ENCODE measurements at regions of chr17 and their contacts with region 1.

Region 1: DNA sequence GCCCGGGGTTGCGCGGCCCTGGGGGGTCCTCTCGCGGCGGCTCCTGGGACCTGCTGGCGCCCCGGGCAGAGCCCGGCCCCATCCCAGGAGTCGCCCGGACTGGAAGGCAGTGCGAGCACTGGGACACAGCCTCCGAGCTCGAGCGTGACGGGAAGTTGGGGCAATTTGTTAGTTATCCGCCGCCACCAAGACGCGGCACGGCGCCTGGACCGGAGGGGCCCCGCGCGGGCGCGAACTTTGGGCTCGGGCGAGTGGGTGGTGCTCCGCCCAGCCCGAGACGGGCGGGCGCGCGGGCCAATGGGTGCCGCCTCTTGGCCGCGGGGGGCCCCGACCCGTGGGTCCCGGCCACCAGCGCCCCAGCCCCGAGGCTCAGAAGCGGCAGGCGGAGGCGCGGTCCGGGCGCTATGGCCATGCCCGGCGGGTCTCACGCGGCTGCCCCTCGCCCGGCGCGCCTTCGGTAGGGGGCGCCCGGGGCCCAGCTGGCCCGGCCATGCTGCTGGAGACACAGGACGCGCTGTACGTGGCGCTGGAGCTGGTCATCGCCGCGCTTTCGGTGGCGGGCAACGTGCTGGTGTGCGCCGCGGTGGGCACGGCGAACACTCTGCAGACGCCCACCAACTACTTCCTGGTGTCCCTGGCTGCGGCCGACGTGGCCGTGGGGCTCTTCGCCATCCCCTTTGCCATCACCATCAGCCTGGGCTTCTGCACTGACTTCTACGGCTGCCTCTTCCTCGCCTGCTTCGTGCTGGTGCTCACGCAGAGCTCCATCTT is at the start of gene ADORA2B:
- DNase-seq: no peak
- H3K4me3 ChIP-seq: peak within 1 kb of the TSS; percentile 79
- CTCF ChIP-seq: peak; percentile 79

Region 2: DNA sequence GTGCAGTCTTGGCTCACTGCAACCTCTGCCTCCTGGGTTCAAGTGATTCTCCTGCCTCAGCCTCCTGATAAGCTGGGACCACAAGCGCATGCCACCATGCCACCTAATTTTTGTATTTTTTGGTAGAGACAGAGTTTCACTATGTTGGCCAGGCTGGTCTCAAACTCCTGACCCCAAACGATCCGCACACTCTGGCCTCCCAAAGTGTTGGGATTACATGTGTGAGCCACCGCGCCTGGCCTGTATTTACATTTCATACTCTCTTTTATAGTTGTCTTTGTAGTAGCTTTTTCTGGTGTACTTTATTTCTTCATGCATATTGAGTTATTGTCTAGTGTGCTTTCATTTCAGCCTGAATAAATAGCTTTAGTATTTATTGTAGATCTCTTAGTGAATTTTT is 10.1 kb before region 1 on chr17:
- CTCF ChIA-PET with region 1: interaction called, 27 read pairs
- POLR2A ChIA-PET with region 1: no interaction called
- DNase-seq: no peak
- H3K4me3 ChIP-seq: no peak overlapping the region
- CTCF ChIP-seq: no peak

Region 3: DNA sequence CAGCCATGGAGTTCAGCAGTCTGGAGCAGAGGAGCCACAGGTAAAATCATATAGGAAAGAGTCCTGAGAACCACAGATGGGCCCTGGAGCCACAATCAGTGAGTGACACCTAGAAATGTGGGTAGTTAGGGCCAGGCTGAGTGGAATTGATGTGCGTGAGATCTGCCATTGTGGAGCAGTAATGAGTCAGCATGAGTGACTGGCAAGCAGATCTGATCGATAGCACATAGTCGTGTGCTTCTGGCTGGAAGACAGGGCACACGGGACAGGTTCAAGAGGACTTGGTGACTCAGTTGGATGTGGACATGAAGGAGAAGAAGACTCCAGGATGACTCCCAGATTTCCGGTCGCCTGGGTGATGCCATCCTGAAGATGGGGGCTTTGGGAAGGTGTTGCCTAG is 12.3 kb after region 1 on chr17:
- CTCF ChIA-PET with region 1: interaction called, 14 read pairs
- POLR2A ChIA-PET with region 1: interaction called, 13 read pairs
- DNase-seq: no peak
- H3K4me3 ChIP-seq: no peak overlapping the region
- CTCF ChIP-seq: no peak

Region 4: GRCh38 chr17:15966183-15966878 is 21.4 kb after region 1 on chr17:
- CTCF ChIA-PET with region 1: interaction called, 15 read pairs
- POLR2A ChIA-PET with region 1: no interaction called
- DNase-seq: no peak
- H3K4me3 ChIP-seq: no peak overlapping the region
- CTCF ChIP-seq: no peak

Region 5: GRCh38 chr17:15999439-16000350 is 54.8 kb after region 1 on chr17 and contains the starts of genes TTC19 and ZSWIM7:
- CTCF ChIA-PET with region 1: interaction called, 34 read pairs
- POLR2A ChIA-PET with region 1: interaction called, 15 read pairs
- DNase-seq: peak; percentile 53
- H3K4me3 ChIP-seq: peak within 1 kb of the TSS; percentile 85
- CTCF ChIP-seq: no peak

Region 6: DNA sequence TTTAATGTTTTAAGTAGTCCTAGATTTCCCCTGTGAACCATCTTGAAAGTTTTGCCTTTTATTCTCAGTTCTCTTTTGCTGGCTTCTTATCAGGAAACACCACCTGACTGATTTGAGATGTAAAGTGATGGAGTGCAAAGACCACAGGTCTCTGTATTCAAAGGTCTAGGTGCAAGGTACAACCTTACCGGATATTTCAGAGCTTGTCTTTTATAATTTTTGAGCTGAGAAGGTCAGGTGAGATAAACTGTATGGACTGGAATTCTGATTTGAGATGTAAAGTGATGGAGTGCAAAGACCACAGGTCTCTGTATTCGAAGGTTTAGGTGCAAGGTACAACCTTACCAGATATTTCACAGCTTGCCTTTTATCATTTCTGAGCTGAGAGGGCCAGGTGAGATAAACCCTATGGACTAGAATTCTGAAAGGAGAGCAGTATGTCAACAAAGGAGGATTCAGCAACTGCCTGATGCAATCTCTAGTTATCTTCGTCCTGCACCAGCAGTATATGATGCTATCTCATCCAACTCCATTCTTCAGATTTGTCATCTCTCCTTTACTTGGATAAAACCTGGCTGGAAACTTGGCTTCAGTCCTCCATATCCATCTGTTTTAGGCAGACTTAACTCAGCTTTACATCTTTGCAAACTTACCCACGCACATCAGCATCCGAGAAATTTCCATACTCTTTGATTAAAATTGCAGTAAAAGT is 344.1 kb after region 1 on chr17:
- CTCF ChIA-PET with region 1: no interaction called
- POLR2A ChIA-PET with region 1: no interaction called
- DNase-seq: no peak
- H3K4me3 ChIP-seq: no peak overlapping the region
- CTCF ChIP-seq: no peak

Measured in AG04449 (cell line).